ENCODE measurements at regions of chr11 and their contacts with region 1.

Region 1: DNA sequence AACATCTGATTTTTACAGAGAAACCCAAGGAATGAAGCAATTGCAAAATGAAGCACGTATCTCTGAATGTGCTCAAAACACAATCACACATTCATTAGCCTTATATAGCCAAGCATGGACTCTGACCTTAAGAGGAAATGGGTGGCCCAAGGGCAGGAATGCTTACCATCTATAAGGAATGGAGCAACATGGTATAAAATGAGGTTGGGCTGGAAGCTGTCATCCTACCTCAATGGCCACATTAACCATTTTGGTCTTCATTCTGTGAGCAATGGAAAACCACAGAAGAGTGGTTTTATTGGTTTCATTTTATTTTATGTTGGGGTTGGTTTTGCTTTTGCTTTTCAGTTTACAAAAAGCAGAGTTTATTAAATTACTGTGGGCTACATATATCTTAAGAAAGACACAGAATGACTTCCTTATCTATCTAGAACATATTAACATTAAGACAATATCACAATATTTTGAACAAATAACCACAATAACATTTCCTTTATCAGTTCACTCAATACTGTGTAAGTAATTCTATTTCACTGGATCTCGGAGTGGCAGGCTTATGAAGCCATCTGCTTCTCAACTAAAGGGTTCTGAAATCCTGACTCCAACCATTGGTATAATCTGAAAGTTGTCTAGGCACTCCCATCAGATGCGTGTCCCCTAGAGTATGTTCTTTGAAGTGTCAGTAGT is 10.8 kb upstream of the MS4A13 start:
- DNase-seq: no peak
- ATAC-seq: no peak
- H3K4me3 ChIP-seq: no peak overlapping the region
- H3K4me3 Mint-ChIP-seq: peak overlapping the region in 1 of 10 donors; percentile 8
- H3K27ac ChIP-seq: no peak overlapping the region
- H3K27ac Mint-ChIP-seq: no peak overlapping the region
- H3K4me1 ChIP-seq: peaks cover 0 to 11% of the 10 kb centered on the region in 2 donors
- H3K4me1 Mint-ChIP-seq: peaks cover 4 to 10% (median 6%) of the 10 kb centered on the region in 7 donors
- H3K27me3 ChIP-seq: no peaks in the 10 kb centered on the region
- H3K27me3 Mint-ChIP-seq: peaks cover 4 to 55% (median 19%) of the 10 kb centered on the region in 5 donors

Region 2: DNA sequence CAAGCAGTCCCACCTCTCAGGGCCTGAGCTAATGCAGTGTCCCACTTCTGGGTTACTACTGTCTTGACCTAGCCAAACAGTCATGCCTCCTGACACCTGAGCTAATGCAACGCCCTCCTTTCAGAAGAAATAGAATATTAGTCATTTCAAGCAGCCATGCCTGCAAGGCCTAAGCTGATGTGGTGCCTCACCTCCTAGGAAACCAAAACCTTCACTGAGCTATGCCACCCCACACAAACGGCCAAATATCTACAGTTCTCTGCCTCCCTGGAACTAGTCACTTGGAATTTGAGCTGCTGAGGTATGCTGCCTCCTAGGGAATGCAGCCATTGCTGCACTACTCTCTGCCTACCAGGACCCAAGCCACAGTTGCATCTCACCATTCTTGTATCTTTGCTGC is 185.6 kb before region 1 on chr11:
- CTCF ChIA-PET with region 1: no interaction called
- POLR2A ChIA-PET with region 1: no interaction called
- intact Hi-C with region 1: no loop called
- DNase-seq: no peak
- ATAC-seq: no peak
- H3K4me3 ChIP-seq: no peak overlapping the region
- H3K4me3 Mint-ChIP-seq: no peak overlapping the region
- H3K27ac ChIP-seq: no peak overlapping the region
- H3K27ac Mint-ChIP-seq: no peak overlapping the region
- H3K4me1 ChIP-seq: no peaks in the 10 kb centered on the region
- H3K4me1 Mint-ChIP-seq: no peaks in the 10 kb centered on the region
- H3K27me3 ChIP-seq: no peaks in the 10 kb centered on the region
- H3K27me3 Mint-ChIP-seq: peaks cover 0 to 44% (median 32%) of the 10 kb centered on the region in 5 donors

Region 3: GRCh38 chr11:60447846-60448245 is 56.5 kb before region 1 on chr11:
- CTCF ChIA-PET with region 1: no interaction called
- POLR2A ChIA-PET with region 1: no interaction called
- intact Hi-C with region 1: loop called in 1 of 2 experiments (anchors 5 kb)
- DNase-seq: no peak
- ATAC-seq: no peak
- H3K4me3 ChIP-seq: no peak overlapping the region
- H3K4me3 Mint-ChIP-seq: peak overlapping the region in 1 of 10 donors; percentile 12
- H3K27ac ChIP-seq: no peak overlapping the region
- H3K27ac Mint-ChIP-seq: peak overlapping the region in 1 of 9 donors; percentile 32
- H3K4me1 ChIP-seq: peaks cover 6 to 10% of the 10 kb centered on the region in 2 donors
- H3K4me1 Mint-ChIP-seq: peaks cover 13 to 26% (median 19%) of the 10 kb centered on the region in 7 donors
- H3K27me3 ChIP-seq: no peaks in the 10 kb centered on the region
- H3K27me3 Mint-ChIP-seq: no peaks in the 10 kb centered on the region